Activated CD8-positive, alpha-beta memory T cell treated with anti-CD3 and anti-CD28 coated beads, Interleukin-2, amount 10 ng/mL, durations not matched to agents 7 days and 5 days (primary cell): ENCODE measurements at regions of chr7 and their contacts with region 1.

Region 1: DNA sequence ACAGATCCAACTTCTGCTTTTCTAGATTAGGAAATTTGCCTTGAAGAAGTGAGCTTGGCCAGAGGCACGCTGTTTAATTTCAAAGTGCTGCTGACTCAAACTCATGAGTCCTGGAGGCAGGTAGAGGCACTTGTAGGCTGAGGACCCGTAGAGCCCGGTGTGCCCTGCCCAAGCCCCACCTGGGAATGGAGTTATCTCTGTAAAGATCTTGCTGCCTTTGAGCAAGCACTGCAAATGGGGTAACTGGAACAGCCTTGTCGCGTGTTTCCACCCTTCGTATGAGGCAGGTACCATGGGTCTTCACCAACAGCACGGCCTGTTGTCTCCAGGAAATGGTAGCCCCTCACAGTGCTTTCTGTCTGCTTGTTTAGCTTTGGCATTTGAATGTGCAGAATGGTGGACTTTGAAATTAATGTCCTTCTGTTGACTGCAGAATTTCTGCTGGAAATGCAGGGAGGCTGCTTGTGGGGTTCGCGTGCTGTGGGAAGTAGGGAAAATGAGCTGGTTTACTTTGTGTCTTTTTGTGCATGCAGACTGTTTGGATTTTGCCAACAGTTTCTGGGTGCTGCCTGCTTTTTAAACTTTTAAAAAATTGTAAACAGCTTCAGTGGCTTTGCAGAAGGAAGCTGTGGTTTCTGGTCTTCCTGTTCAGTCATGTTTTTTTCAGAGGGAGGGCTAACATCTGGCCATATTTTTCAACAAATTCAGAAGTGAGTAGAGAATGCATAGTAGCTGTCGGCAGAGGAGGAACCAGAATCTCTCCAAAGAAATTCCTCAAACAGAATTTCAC is 27.2 kb downstream of the CCM2 start:
- DNase-seq: peak; percentile 68
- ATAC-seq: peak; percentile 62
- H3K4me3 Mint-ChIP-seq: peak overlapping the region; percentile 82
- H3K27ac Mint-ChIP-seq: peak overlapping the region; percentile 86
- H3K4me1 Mint-ChIP-seq: peaks cover 71% of the 10 kb centered on the region
- H3K27me3 Mint-ChIP-seq: no peaks in the 10 kb centered on the region

Region 2: GRCh38 chr7:44980393-44981034 is 46.7 kb before region 1 on chr7:
- CTCF ChIA-PET with region 1: interaction called, 27 read pairs
- DNase-seq: peak; percentile 91
- ATAC-seq: peak; percentile 22
- H3K4me3 Mint-ChIP-seq: peak overlapping the region; percentile 99
- H3K27ac Mint-ChIP-seq: peak overlapping the region; percentile 95
- H3K4me1 Mint-ChIP-seq: peaks cover 71% of the 10 kb centered on the region
- H3K27me3 Mint-ChIP-seq: no peaks in the 10 kb centered on the region